ENCODE measurements at regions of chr7 and their contacts with region 1.

Region 1: DNA sequence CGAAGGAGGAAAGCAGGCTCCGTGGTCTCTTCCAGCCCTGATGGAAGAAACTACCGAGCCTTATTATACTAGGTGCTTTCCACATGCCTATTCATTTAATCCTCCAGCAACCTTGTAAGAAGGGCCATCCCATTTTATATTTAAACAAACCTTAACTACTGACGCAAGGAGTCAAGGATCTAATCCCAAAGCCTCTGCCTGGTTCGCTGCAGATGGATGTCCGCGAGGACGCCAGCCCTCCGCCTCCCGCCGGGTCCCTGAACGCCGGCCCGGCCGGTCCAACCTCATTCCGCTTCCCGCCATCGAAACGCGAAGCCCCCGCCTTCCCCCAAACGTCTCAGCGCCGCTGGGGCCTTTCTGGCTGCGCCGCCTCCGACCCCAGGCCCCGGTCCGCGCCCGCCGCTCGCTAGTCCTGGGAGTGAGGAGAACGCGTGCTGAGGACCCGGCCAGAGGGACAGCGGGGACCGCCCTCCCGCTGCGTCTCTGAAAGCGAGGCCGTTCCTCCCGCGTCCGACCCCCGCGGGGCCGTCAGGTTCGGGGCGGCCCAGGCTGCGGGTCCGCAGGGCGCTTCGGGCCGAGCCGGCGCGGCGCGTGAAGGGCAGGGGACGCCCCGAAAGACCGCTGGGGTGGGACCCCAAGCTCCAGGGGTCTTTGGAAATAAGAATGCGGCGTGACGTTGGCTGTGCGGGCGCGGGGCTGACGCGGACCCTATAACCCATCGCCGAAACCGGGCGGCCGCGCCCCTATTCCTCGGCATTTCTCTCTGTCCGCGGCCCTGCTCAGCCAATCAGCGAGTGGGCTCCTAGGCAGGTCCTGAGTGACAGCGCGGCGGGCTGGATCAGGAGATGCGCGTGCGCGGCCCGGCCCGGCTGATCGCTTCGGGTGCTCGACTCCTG is at the start of gene ATP6V0E2:
- DNase-seq: peak; percentile 98
- ATAC-seq: peak; percentile 95
- total RNA-seq, gene ATP6V0E2: 121 TPM

Region 2: GRCh38 chr7:149586646-149587332 is 286.5 kb before region 1 on chr7:
- intact Hi-C with region 1: no loop called
- DNase-seq: no peak
- ATAC-seq: no peak

Region 3: GRCh38 chr7:149707448-149707886 is 165.9 kb before region 1 on chr7:
- intact Hi-C with region 1: no loop called
- DNase-seq: no peak
- ATAC-seq: no peak

Region 4: GRCh38 chr7:149838224-149838947 is 34.9 kb before region 1 on chr7 and contains the start of gene ZNF862:
- intact Hi-C with region 1: loop called (anchors 5 kb)
- DNase-seq: peak; percentile 100
- ATAC-seq: peak; percentile 99
- total RNA-seq, gene ZNF862: 12.2 TPM

Measured in Right ventricle myocardium superior (tissue), 1 donor.